ENCODE measurements at regions of chr3 and their contacts with region 1.

Region 1: DNA sequence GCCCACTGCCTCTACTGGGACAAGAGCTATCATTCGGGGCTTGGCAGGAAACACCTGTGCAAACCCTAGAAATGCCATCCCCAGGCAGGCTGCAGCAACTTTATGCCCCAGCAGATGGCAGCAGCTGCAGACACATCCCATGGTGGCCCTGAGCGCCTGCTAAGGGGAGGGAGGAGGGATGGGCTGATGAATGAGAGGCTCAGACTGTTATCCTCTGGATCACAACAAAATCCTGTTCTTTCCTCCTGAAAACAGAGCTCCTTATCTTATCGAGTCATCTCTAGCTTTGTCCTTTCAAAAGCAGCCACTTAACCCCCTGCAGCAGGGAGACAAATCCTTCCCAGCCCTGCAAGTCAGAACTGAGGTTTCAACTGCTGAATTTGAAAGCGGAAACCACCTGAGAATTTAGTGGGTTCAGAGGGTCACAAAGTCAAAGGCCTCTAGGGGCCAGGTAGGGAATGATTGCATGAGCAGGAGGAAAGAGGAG is 90.6 kb upstream of the PROK2 start:
- DNase-seq: peak; percentile 76
- ATAC-seq: peak; percentile 95

Region 2: GRCh38 chr3:72259755-72260587 is 384.5 kb after region 1 on chr3:
- intact Hi-C with region 1: loop called in 1 of 2 experiments (anchors 5 kb)
- DNase-seq: no peak
- ATAC-seq: no peak

Region 3: DNA sequence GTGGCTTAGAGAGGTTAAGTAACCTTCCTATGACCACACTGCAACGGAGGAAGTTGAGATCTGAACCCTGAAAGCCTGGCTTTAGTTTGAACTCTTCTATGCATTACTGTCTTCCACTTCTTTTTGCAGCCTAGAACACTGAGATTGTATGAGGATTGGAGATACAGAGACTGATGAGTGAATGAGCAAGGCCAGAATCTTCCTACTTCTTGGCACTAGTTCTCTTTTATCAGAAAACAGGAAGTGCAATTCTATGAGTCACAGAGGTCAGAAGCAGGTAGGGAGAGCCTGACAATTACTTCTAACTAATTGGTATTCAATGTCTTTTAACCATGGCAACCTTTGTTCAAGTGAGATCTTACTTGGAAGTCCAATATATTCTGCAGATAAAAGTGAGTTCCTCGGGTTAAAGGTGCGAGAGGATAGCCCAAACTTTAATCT is 753.7 kb after region 1 on chr3:
- intact Hi-C with region 1: loop called in 1 of 2 experiments (anchors 10 kb)
- DNase-seq: no peak
- ATAC-seq: peak in 1 of 2 donors; percentile 72